Lower leg skin (tissue), 4 donors: ENCODE measurements at regions of chr1 and their contacts with region 1.

Region 1: DNA sequence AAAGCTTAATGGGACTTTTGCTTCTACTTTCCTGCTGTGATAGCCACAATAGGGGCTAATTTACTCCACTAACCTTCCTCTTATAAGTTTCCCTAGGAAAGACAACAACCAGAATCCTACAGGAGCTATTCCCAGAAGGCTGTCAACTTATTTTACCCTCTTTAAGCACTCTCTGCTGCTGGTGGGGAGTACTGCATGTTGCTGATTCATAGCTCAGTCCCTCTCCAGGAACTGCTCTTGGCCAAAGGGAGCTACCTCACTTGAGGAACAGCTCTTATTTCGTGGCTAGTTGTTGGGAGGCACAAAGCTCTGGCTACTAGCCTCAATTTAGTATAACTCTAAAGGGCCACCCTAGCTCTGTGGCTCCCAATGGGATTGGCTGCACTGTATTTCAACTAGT is 37.2 kb downstream of the ADSS2 start:
- DNase-seq: no peak
- H3K4me3 ChIP-seq: no peak overlapping the region
- CTCF ChIP-seq: no peak
- POLR2A ChIP-seq: no peak

Region 2: GRCh38 chr1:244369644-244370057 is 44.9 kb before region 1 on chr1:
- intact Hi-C with region 1: loop called (anchors 1 kb)
- DNase-seq: peak in 1 of 2 donors; percentile 76
- H3K4me3 ChIP-seq: no peak overlapping the region
- CTCF ChIP-seq: no peak
- POLR2A ChIP-seq: no peak